Endothelial cell of umbilical vein (primary cell): ENCODE measurements at regions of chr12 and their contacts with region 1.

Region 1: DNA sequence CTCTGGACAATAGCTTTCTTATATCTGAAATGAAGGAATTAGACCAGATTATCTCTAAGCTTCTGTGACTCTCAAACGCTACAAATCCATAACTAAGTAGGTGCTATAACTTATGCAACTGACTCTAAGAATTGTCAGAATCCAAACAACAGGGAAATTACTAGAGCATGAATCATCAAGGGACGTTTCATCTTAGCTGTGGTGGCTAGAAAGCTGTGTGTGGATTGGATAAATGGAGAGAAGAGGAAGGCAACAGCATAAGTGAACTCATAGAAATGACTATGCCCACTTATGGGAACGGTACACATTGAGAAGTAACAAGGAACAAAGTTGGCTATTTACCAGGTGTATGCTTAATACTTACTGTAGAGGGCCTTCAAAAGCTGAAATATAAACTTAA is 96.0 kb upstream of the NEDD1 start:
- DNase-seq: peak; percentile 94
- H3K4me3 ChIP-seq: no peak overlapping the region
- H3K27ac ChIP-seq: peak overlapping the region; percentile 93
- H3K4me1 ChIP-seq: peaks cover 37% of the 10 kb centered on the region
- H3K27me3 ChIP-seq: no peaks in the 10 kb centered on the region
- CTCF ChIP-seq: no peak
- POLR2A ChIP-seq: peak; percentile 17

Region 2: GRCh38 chr12:96698521-96698920 is 112.6 kb before region 1 on chr12:
- CTCF ChIA-PET with region 1: no interaction called
- POLR2A ChIA-PET with region 1: no interaction called
- dilution Hi-C with region 1: no loop called
- intact Hi-C with region 1: no loop called
- DNase-seq: no peak
- H3K4me3 ChIP-seq: no peak overlapping the region
- H3K27ac ChIP-seq: no peak overlapping the region
- H3K4me1 ChIP-seq: peaks cover 6% of the 10 kb centered on the region
- H3K27me3 ChIP-seq: no peaks in the 10 kb centered on the region
- CTCF ChIP-seq: no peak
- POLR2A ChIP-seq: no peak

Region 3: GRCh38 chr12:96886998-96887677 is 76.1 kb after region 1 on chr12:
- CTCF ChIA-PET with region 1: no interaction called
- POLR2A ChIA-PET with region 1: no interaction called
- dilution Hi-C with region 1: no loop called
- intact Hi-C with region 1: loop called (anchors 5 kb)
- DNase-seq: peak; percentile 26
- H3K4me3 ChIP-seq: no peak overlapping the region
- H3K27ac ChIP-seq: no peak overlapping the region
- H3K4me1 ChIP-seq: peaks cover 16% of the 10 kb centered on the region
- H3K27me3 ChIP-seq: no peaks in the 10 kb centered on the region
- CTCF ChIP-seq: no peak
- POLR2A ChIP-seq: no peak

Region 4: DNA sequence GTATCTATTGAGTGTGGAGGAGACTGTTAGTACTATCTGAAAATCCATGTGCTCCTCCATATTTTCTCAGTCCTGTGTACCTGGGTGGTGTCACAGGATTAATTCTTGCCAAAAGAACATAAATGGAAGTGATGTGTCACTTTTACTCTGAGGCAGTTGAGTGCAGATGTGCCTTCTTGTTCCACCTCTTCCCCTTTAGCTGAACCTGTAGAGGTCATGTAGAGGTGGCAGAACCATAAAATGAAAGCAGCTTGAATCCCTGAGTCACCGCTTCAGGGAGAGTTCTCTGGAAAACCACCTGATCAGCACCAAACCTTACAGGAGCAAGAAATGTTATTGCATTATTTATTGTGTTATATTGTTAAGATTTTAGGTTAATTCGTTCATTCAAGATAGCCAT is 1767.7 kb after region 1 on chr12:
- CTCF ChIA-PET with region 1: no interaction called
- POLR2A ChIA-PET with region 1: no interaction called
- dilution Hi-C with region 1: no loop called
- intact Hi-C with region 1: no loop called
- DNase-seq: no peak
- H3K4me3 ChIP-seq: no peak overlapping the region
- H3K27ac ChIP-seq: no peak overlapping the region
- H3K4me1 ChIP-seq: no peaks in the 10 kb centered on the region
- H3K27me3 ChIP-seq: no peaks in the 10 kb centered on the region
- CTCF ChIP-seq: no peak
- POLR2A ChIP-seq: no peak